ENCODE measurements at regions of chr9 and their contacts with region 1.

Region 1: GRCh38 chr9:37079370-37080164 is 40.8 kb upstream of the ZCCHC7 start:
- DNase-seq: peak; percentile 94
- ATAC-seq: peak; percentile 99
- H3K4me3 ChIP-seq: peak overlapping the region; percentile 71 to 89
- H3K27ac ChIP-seq: peak overlapping the region; percentile 92
- H3K4me1 ChIP-seq: peaks cover 14% of the 10 kb centered on the region; the same call in 1 of the 2 replicates
- H3K27me3 ChIP-seq: no peaks in the 10 kb centered on the region
- CTCF ChIP-seq: no peak

Region 2: DNA sequence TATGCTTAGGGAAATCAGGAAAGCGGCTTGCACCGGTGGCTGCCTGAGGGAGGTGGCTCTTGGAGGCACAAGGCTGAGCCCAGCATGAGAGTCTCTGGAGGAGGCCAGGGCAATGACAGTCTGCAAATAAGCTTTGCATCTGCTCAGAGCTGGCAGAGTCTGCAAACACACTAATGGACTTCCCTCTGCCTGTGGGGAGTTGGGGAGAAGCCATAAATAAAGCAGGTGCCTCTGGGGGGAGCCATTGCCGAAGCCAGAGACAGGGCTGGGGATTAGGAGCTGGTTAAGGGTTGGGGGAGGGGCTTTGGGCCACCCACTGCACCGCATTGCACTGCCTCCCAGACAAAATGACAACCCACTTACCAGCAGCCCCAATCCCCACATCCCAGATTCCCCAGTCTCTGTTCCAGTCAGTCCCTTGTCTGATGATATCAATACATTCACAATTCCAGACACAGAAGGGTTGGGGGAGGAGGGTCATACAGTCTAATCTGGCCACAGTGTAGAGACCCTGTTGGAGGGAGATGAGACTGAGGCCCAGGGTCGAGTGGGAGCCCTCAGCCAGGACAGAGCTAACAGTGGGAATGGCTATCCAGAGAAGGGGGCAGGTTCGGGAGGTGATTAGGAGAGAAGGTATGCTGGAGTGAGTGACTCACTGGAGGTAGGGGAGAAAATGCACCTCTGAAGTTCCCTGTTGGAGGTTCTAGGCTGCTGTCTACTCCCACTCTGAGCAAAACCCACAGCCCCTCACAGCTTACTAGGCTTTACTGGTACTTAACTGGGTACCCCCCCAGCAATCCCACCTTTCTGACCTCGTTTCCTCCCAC is 99.2 kb before region 1 on chr9:
- CTCF ChIA-PET with region 1: no interaction called
- POLR2A ChIA-PET with region 1: no interaction called
- in situ Hi-C with region 1: no loop called
- intact Hi-C with region 1: no loop called
- DNase-seq: no peak
- ATAC-seq: peak; percentile 80
- H3K4me3 ChIP-seq: no peak overlapping the region
- H3K27ac ChIP-seq: no peak overlapping the region
- H3K4me1 ChIP-seq: peaks cover 4% of the 10 kb centered on the region
- H3K27me3 ChIP-seq: peaks cover 7% of the 10 kb centered on the region
- CTCF ChIP-seq: no peak

Region 3: DNA sequence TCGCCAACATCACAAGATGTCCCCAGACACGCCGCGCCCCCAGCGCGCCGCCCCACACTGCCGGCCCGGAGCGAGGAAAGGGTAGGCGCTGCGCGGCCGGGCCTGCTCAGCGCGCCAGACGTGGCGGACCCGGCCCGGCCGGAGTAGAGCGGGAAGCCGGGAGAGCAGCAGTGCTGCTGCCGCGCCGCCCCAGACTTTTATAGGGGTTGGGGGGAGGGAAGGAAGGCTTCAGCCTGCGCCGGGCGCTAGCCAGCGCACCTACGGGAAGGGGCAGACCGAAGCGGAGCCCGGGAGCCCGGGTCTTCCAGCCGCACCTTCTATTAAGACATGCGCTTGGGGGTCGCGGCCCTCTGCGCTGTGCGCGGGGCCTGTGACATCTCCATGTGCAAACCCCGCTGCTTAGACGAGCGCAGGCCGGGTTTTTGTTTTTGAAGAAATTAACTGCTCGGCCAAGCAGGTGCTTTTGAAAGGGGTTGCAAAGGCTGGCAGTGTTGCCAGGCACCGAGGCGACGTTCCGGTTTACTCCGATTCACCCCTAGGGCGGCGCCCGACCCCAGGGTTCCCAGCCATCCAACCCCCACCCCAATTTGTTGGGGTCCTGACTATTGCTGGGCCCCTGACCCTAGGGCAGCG is 45.1 kb before region 1 on chr9:
- CTCF ChIA-PET with region 1: interaction called, 4 read pairs
- POLR2A ChIA-PET with region 1: interaction called, 3 read pairs
- in situ Hi-C with region 1: no loop called
- intact Hi-C with region 1: loop called (anchors 2 kb)
- DNase-seq: no peak
- ATAC-seq: peak; percentile 54
- H3K4me3 ChIP-seq: peak overlapping the region; percentile 27 to 45
- H3K27ac ChIP-seq: no peak overlapping the region
- H3K4me1 ChIP-seq: peaks cover 19% of the 10 kb centered on the region
- H3K27me3 ChIP-seq: peaks cover 42% of the 10 kb centered on the region
- CTCF ChIP-seq: no peak

Region 4: GRCh38 chr9:37100327-37100726 is 20.8 kb after region 1 on chr9:
- CTCF ChIA-PET with region 1: interaction called, 8 read pairs
- POLR2A ChIA-PET with region 1: interaction called, 10 read pairs
- in situ Hi-C with region 1: no loop called
- intact Hi-C with region 1: no loop called
- DNase-seq: no peak
- ATAC-seq: peak; percentile 41; the same call in 1 of the 2 replicates
- H3K4me3 ChIP-seq: no peak overlapping the region
- H3K27ac ChIP-seq: no peak overlapping the region
- H3K4me1 ChIP-seq: no peaks in the 10 kb centered on the region
- H3K27me3 ChIP-seq: no peaks in the 10 kb centered on the region
- CTCF ChIP-seq: no peak

Measured in Panc1 (cell line).